Right ventricle myocardium superior (tissue), 1 donor: ENCODE measurements at regions of chr5 and their contacts with region 1.

Region 1: GRCh38 chr5:142108432-142109330 is at the start of gene NDFIP1:
- DNase-seq: peak; percentile 93
- ATAC-seq: peak; percentile 98
- total RNA-seq, gene NDFIP1: 50.7 TPM

Region 2: GRCh38 chr5:141521244-141521781 is 587.4 kb before region 1 on chr5:
- intact Hi-C with region 1: no loop called
- DNase-seq: no peak
- ATAC-seq: peak; percentile 78

Region 3: GRCh38 chr5:142012792-142013388 is 95.8 kb before region 1 on chr5 and contains the start of gene GNPDA1:
- intact Hi-C with region 1: loop called (anchors 5 kb)
- DNase-seq: peak; percentile 91
- ATAC-seq: peak; percentile 95
- total RNA-seq, gene GNPDA1: 22.7 TPM